ENCODE measurements at regions of chr12 and their contacts with region 1.

Region 1: DNA sequence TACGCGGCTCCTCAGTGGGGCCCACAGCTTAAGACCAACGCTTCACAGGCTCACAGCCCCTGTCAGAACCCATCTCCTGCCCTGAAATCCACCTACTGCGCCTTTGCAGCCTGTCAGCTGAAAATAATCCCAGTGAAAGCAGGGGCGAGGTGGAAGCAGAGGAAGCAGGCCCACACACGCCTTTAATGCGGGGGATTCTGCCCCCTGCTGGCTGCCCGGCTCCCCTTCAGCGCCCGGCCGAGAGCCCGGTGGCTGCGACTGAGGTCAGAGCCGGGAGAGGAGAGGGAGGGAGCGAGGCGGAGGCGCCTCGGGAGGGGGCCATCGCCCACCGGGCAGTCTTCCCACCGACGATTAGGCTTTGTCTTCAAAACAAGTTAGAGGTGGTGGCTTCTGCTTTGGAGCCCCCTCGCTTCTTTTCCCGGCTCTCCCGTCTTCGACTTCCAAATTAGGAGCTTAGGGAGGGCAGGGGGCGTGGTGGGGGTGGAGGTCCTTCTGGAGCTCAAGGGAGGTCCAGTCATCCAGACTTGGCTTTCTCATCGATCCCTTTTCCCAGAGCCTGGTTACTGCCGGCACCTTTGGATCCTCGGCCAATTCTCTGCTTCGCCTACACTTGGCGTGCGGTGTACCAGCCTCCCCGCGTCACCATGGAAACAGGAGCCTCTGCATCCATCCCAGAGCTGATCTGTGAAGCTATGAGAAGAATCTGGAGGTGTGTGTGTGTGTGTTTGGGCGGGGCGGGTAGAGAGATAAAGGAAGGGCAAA is 25.2 kb upstream of the RND1 start:
- DNase-seq: peak; percentile 89
- ATAC-seq: peak; percentile 99
- H3K4me3 Mint-ChIP-seq: peak overlapping the region; percentile 4
- H3K27ac Mint-ChIP-seq: no peak overlapping the region
- H3K4me1 Mint-ChIP-seq: peaks cover 4% of the 10 kb centered on the region
- H3K27me3 Mint-ChIP-seq: peaks cover 14% of the 10 kb centered on the region

Region 2: GRCh38 chr12:48857278-48857994 is 33.4 kb before region 1 on chr12:
- CTCF ChIA-PET with region 1: interaction called, 152 read pairs
- POLR2A ChIA-PET with region 1: interaction called, 3 read pairs
- intact Hi-C with region 1: loop called (anchors 1 kb)
- DNase-seq: no peak
- ATAC-seq: no peak
- H3K4me3 Mint-ChIP-seq: no peak overlapping the region
- H3K27ac Mint-ChIP-seq: no peak overlapping the region
- H3K4me1 Mint-ChIP-seq: peaks cover 12% of the 10 kb centered on the region
- H3K27me3 Mint-ChIP-seq: peaks cover 9% of the 10 kb centered on the region

Region 3: DNA sequence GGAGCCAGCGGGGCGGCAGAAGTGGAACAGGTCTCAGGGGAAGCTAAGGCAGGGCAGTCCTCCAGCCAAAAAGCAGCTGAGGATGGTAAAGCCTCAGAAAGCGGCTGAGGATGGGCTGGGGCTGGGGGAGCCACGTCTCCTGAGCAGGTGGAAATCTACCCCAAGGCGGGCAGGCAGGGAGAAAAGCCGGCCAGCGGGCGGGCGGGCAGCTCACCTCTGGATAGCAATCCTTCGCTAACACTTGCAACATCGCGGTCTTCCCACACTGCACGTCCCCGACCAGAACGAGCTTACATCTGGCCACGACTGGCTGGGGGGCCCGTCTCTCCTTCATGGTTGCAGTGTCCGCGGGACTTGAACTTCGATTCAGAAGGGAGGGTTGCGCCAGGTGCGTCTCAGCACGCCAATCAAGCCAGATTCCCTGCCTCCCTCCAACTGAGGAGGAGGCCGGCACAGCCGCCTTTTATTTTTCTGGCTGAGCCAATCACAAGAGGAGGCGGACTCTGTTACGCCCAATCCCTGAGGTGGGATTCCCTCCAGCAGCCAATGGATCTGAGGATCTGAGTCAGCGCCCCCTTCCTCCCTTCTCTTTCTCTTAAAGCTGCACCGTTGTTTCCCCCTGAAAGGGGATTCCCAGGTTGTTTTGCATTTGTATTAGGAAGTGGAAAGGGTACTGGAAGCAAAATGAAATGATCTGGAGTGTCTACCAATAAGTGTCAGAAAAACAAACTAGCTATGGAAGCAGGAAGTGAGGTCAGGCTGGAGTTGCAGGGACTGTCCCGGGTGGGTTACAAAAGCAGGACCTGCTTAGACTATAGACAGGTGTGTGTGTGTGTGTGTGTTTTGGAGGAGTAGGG is 25.2 kb before region 1 on chr12 and contains the start of gene RND1:
- CTCF ChIA-PET with region 1: interaction called, 9 read pairs
- POLR2A ChIA-PET with region 1: interaction called, 3 read pairs
- intact Hi-C with region 1: loop called in 1 of 2 experiments (anchors 1 kb)
- DNase-seq: peak; percentile 89
- ATAC-seq: peak; percentile 95
- H3K4me3 Mint-ChIP-seq: peak within 1 kb of the TSS; percentile 74
- H3K27ac Mint-ChIP-seq: peak within 1 kb of the TSS; percentile 85
- H3K4me1 Mint-ChIP-seq: peaks cover 24% of the 10 kb centered on the region
- H3K27me3 Mint-ChIP-seq: peaks cover 33% of the 10 kb centered on the region
- total RNA-seq, gene RND1: 2.2 to 3.3 TPM

Region 4: GRCh38 chr12:48873096-48873495 is 17.7 kb before region 1 on chr12:
- CTCF ChIA-PET with region 1: interaction called, 17 read pairs
- POLR2A ChIA-PET with region 1: no interaction called
- intact Hi-C with region 1: no loop called
- DNase-seq: no peak
- ATAC-seq: no peak
- H3K4me3 Mint-ChIP-seq: no peak overlapping the region
- H3K27ac Mint-ChIP-seq: no peak overlapping the region
- H3K4me1 Mint-ChIP-seq: no peaks in the 10 kb centered on the region
- H3K27me3 Mint-ChIP-seq: no peaks in the 10 kb centered on the region

Region 5: DNA sequence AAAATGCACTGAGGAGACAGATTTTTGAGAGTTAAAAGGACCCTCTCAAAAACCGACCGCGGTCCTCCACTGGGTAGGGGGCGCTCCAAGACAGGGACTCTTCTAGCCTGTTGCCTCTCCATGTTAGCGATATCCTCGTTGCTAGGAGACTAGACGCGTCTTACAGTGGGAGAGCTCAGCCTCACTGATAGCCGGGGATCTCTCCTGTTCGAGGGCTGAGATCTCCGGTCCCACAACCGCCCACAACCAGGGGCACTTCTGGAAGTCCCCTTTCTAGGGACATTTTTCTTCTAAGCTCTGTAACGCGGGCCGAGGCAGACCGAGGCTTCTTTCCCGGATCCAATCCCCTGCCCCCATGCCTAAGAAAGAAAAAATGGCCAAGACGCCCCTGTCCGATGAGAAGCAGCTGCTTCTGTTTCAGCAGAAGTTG is 13.2 kb after region 1 on chr12:
- CTCF ChIA-PET with region 1: interaction called, 70 read pairs
- POLR2A ChIA-PET with region 1: no interaction called
- intact Hi-C with region 1: no loop called
- DNase-seq: peak; percentile 92
- ATAC-seq: peak; percentile 94
- H3K4me3 Mint-ChIP-seq: peak overlapping the region; percentile 63
- H3K27ac Mint-ChIP-seq: no peak overlapping the region
- H3K4me1 Mint-ChIP-seq: peaks cover 5% of the 10 kb centered on the region
- H3K27me3 Mint-ChIP-seq: peaks cover 3% of the 10 kb centered on the region